Naive thymus-derived CD8-positive, alpha-beta T cell (primary cell): ENCODE measurements at regions of chr17 and their contacts with region 1.

Region 1: GRCh38 chr17:28357061-28357900 is at the start of gene POLDIP2:
- DNase-seq: peak; percentile 92 to 97 (median 96)
- ATAC-seq: peak; percentile 97 to 98
- H3K4me3 Mint-ChIP-seq: peak within 1 kb of the TSS; percentile 89 to 96 (median 93)
- H3K27ac Mint-ChIP-seq: peak within 1 kb of the TSS; percentile 91 to 97 (median 96)
- H3K4me1 Mint-ChIP-seq: peaks cover 19 to 33% (median 26%) of the 10 kb centered on the region in 4 donors
- H3K27me3 Mint-ChIP-seq: no peaks in the 10 kb centered on the region
- polyA plus RNA-seq, gene POLDIP2: 81.3 to 90.3 (median 85.6) TPM

Region 2: DNA sequence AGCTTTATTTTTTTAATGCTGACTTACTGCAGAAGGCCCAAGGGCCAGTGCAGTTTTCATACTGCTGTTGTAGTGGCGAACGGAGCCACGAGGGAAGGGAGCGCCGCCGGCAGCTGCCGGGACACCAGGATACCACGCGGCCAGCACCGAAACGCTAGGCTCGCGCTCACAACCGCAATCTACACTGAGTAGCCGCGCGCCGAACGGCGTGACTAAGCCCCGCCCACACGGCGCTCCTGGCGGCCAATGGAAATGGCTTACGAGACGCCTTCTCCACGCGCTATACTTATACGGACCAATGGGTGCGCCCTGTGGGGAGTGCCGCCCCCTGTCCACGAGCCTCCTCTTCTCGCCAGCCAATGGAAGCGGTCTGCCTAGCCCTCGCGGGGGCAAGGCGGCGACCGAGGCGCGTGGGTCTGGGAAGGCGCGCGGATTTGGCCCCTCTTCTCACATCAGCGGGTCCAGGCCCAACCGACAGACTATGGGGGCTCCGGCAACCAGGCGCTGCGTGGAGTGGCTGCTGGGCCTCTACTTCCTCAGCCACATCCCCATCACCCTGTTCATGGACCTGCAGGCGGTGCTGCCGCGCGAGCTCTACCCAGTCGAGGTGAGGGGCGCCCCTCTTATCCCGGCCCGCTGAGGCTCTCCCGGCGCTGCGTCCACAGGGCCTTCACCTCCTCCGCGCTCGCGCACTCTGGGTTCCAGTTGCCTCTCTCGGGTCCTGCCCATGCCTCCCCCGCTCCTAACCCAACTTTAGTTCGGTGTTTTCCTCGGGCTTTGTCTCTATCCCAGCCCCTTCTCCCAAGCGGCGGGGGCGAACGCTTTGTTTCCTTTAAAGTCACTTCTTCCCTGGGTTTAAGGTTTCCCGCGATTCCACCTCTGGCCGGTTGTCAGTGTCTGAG is 38.3 kb before region 1 on chr17 and contains the start of gene TMEM97:
- POLR2A ChIA-PET with region 1: interaction called, 17 read pairs
- DNase-seq: peak; percentile 87 to 97 (median 92)
- ATAC-seq: peak; percentile 98
- H3K4me3 Mint-ChIP-seq: peak within 1 kb of the TSS; percentile 87 to 95 (median 90)
- H3K27ac Mint-ChIP-seq: peak within 1 kb of the TSS; percentile 31 to 92 (median 88)
- H3K4me1 Mint-ChIP-seq: peaks cover 15 to 32% (median 23%) of the 10 kb centered on the region in 4 donors
- H3K27me3 Mint-ChIP-seq: peaks cover 0 to 1% (median 0%) of the 10 kb centered on the region in 5 donors
- polyA plus RNA-seq, gene TMEM97: 7.1 to 10.1 (median 9.3) TPM

Region 3: DNA sequence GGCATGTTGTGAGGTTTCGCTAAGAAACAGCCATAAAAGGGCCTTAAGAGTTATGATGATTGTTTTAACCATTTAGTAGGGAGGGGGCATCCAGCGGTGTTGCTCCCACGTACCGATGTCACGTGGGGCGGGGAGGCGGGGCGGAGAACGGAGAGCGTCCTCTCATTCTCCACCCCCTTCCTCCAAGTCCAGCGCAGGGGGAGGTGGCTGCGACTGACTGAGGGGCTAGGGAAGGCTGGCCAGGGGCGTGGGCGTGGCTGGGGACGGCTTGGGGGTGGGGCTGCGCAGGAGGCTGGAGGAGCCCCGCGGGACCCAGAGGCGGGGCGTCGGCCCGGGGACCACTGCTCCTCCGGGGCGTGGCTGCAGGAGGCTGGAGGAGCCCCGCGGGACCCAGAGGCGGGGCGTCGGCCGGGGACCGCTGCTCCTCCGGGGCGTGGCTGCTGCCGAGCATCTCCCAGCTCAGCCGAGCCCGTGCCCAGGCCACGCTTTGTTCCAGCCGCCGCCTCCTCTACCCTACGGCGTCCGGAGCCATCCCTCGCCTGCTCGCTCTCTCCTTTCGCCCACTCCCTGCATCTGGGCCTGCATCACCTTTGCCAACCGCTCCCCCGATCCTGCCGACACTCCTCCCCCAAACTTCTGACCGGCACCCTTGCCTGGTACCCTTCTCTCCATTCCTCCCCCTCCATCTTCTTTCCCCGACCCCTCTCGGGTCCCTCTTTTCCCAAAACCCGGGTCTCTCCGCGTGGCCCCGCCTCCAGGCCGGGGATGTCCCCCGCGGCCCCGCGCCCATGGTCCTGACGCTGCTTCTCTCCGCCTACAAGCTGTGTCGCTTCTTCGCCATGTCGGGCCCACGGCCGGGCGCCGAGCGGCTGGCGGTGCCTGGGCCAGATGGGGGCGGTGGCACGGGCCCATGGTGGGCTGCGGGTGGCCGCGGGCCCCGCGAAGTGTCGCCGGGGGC is 14.2 kb after region 1 on chr17 and contains the start of gene SARM1:
- POLR2A ChIA-PET with region 1: interaction called, 29 read pairs
- DNase-seq: peak; percentile 64 to 89 (median 76)
- ATAC-seq: peak; percentile 84 to 85
- H3K4me3 Mint-ChIP-seq: peak within 1 kb of the TSS; percentile 86 to 99 (median 96)
- H3K27ac Mint-ChIP-seq: peak within 1 kb of the TSS; percentile 87 to 98 (median 96)
- H3K4me1 Mint-ChIP-seq: peaks cover 12 to 25% (median 23%) of the 10 kb centered on the region in 4 donors
- H3K27me3 Mint-ChIP-seq: no peaks in the 10 kb centered on the region
- polyA plus RNA-seq, gene SARM1: 5.3 to 8.4 (median 7.0) TPM

Region 4: GRCh38 chr17:28384281-28385036 is 27.2 kb after region 1 on chr17:
- POLR2A ChIA-PET with region 1: interaction called, 22 read pairs
- DNase-seq: peak; percentile 40 to 75 (median 48)
- ATAC-seq: peak; percentile 90 to 94
- H3K4me3 Mint-ChIP-seq: peak overlapping the region; percentile 89 to 98 (median 94)
- H3K27ac Mint-ChIP-seq: peak overlapping the region; percentile 8 to 91 (median 86)
- H3K4me1 Mint-ChIP-seq: peaks cover 19 to 51% (median 36%) of the 10 kb centered on the region in 4 donors
- H3K27me3 Mint-ChIP-seq: peaks cover 0 to 10% (median 0%) of the 10 kb centered on the region in 5 donors